HCT116 (cell line): ENCODE measurements at regions of chr17 and their contacts with region 1.

Region 1: DNA sequence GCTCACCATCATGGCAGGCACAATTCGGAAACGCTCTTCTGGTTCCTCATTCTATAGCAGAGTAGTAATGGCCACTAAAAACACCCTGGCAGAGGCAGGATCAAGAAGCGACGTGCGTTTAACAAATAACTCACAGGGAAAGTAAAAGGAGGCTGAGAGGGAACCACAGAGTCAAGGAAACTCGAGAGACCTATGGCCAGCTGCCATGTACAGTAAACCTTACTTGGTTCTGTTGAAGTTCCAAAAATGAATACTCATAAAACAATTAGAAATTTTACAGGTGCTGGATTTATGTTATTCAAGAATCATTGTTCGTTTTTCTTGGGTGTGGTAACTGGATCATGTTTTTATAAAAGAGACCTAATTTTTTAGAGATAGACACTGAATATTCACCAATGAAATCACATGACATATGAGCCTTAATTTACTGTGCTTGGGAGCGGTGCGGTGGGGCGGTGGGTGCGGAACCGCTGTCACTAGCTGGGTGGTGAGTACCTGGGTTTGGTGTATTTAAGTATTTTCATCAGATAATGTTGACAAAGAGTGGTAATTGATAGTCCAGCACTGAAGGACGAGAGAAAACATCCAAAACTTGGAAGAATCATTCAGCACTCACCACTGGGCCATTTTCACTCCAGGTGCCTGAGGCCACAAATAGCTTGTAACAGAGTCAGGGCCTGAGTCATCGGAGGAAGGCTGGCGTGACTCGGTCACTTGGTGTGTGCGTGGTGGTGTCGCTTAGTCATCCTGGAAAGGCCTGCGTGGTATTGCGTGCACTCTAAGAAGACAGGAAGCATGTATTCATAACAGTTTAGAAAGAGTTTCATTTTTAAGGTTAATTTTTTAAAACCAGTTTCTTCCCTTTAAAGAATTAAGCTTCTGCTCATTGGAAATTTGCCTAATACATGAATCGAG is 135.4 kb upstream of the CHMP6 start:
- DNase-seq: peak; percentile 94
- ATAC-seq: peak; percentile 99
- H3K4me3 ChIP-seq: peak overlapping the region in 1 of 2 experiments; percentile 34; a peak in 3 of 4 replicates
- H3K27ac ChIP-seq: peak overlapping the region; percentile 80
- H3K4me1 ChIP-seq: peaks cover 17 to 46% of the 10 kb centered on the region in 2 experiments
- H3K27me3 ChIP-seq: no peaks in the 10 kb centered on the region
- CTCF ChIP-seq: no peak
- POLR2A ChIP-seq: no peak
- RAD21 ChIP-seq: no peak; the same call in 1 of the 2 replicates

Region 2: DNA sequence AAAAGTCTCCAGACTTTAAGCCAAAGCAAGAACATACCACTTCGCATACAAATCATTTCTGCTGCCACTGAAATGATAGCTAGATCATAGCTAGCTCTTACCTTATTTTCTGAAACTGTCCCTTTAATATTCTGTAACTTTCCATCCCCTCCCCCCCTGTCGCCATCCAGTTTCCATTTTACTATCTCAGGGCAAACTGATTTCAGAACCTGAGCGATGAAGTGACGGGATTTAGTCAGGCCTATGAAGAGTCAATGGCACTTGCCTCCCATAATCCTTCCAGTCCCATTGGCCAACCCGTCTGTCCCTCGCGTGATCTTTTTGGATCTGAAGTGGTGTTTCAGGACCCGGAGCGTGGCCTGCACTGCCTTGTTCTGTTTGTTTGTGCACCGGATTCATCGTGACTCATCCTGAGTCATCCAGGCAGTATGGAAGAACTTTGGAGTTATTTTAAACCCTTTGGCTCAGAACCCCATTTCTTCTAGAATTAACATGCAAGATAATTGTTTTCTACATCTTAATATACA is 64.4 kb before region 1 on chr17:
- CTCF ChIA-PET with region 1: no interaction called
- POLR2A ChIA-PET with region 1: no interaction called
- RAD21 ChIA-PET with region 1: no interaction called
- intact Hi-C with region 1: loop called (anchors 1 kb)
- DNase-seq: peak; percentile 99
- ATAC-seq: peak; percentile 94
- H3K4me3 ChIP-seq: peak overlapping the region; percentile 8 to 37; a peak in 3 of 4 replicates
- H3K27ac ChIP-seq: peak overlapping the region; percentile 89
- H3K4me1 ChIP-seq: peaks cover 49 to 63% of the 10 kb centered on the region in 2 experiments
- H3K27me3 ChIP-seq: no peaks in the 10 kb centered on the region
- CTCF ChIP-seq: no peak
- POLR2A ChIP-seq: no peak
- RAD21 ChIP-seq: peak; percentile 55

Region 3: GRCh38 chr17:80805032-80805751 is 51.0 kb before region 1 on chr17:
- CTCF ChIA-PET with region 1: no interaction called
- POLR2A ChIA-PET with region 1: no interaction called
- RAD21 ChIA-PET with region 1: no interaction called
- intact Hi-C with region 1: no loop called
- DNase-seq: no peak
- ATAC-seq: no peak
- H3K4me3 ChIP-seq: no peak overlapping the region
- H3K27ac ChIP-seq: no peak overlapping the region
- H3K4me1 ChIP-seq: no peaks in the 10 kb centered on the region
- H3K27me3 ChIP-seq: no peaks in the 10 kb centered on the region
- CTCF ChIP-seq: no peak
- POLR2A ChIP-seq: no peak
- RAD21 ChIP-seq: no peak